Vagina (tissue), 2 donors: ENCODE measurements at regions of chr6 and their contacts with region 1.

Region 1: DNA sequence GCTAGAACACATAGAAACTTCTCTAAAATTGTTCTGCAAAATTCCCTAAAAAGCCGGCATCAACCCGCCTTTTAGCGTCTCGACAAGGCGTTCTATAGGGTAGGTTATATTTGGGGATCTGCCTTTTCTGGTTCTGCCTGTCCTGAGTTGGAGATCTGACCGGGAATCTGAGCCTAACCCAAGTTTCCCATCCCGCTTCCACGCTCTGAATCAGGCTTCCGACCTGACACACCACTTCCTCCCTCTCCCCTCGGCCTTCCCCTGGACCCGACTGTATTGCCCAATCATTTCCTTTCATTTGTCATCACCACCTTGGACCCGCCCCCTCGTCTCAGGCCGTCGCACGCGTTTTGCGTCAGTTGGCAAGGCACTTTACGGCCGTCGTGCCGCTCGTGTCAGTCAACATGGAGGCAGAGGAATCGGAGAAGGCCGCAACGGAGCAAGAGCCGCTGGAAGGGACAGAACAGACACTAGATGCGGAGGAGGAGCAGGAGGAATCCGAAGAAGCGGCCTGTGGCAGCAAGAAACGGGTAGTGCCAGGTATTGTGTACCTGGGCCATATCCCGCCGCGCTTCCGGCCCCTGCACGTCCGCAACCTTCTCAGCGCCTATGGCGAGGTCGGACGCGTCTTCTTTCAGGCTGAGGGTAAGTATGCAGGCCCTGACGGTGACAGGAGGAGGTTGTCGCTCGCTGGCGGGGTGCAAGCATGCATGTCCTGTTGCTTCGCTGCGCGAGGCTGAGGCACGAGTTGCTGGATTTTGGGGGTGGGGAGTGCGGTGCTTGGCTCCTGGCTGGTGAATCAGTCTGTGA is at the start of gene ABT1:
- DNase-seq: peak; percentile 98 to 99
- H3K4me3 ChIP-seq: peak within 1 kb of the TSS; percentile 91 to 94
- H3K27ac ChIP-seq: peak within 1 kb of the TSS; percentile 83
- H3K4me1 ChIP-seq: peaks cover 26% of the 10 kb centered on the region
- H3K27me3 ChIP-seq: no peaks in the 10 kb centered on the region
- CTCF ChIP-seq: no peak
- POLR2A ChIP-seq: peak in 1 of 2 donors; percentile 49
- total RNA-seq, gene ABT1: 24.8 TPM

Region 2: DNA sequence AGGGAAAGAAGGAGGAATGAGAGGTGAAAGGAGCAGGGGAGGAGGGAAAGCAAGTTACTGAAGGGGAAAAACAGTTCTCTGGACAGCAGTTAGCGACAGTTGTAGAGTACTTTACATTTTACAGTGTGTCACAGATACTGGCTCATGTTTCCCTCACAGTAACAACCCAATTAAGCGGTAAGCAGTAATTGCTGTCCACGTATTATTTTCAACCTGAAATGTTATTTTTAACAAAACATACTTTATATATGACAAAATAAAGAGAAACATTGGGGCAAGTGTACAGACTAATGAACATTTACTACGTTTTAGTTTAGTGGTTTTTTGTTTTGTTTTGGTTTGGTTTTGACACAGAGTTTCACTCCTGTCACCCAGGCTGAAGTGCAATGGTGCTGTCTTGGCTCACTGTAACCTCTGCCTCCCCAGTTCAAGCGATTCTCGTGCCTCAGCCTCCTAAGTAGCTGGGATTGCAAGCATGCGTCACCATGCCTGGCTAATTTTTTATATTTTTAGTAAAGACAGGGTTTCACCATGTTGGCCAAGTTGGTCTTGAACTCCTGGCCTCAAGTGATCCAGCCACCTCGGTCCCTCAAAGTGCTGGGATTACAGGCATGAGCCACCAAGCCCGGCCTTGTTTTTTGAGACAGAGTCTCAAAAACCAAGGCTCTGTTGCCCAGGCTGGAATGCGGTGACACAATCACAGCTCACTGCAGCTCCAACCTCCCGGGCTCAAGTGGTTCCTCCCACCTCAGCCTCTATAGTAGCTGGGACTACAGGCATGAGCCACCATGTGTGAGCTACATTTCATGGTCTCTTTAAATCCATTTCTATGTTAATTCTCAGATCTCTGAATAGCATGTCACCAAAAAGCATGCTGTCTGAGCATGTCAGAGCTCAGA is 254.4 kb before region 1 on chr6:
- intact Hi-C with region 1: loop called (anchors 10 kb)
- DNase-seq: no peak
- H3K4me3 ChIP-seq: peak overlapping the region in 1 of 2 donors; percentile 9
- H3K27ac ChIP-seq: no peak overlapping the region
- H3K4me1 ChIP-seq: no peaks in the 10 kb centered on the region
- H3K27me3 ChIP-seq: no peaks in the 10 kb centered on the region
- CTCF ChIP-seq: no peak
- POLR2A ChIP-seq: no peak